ENCODE measurements at regions of chr20 and their contacts with region 1.

Region 1: DNA sequence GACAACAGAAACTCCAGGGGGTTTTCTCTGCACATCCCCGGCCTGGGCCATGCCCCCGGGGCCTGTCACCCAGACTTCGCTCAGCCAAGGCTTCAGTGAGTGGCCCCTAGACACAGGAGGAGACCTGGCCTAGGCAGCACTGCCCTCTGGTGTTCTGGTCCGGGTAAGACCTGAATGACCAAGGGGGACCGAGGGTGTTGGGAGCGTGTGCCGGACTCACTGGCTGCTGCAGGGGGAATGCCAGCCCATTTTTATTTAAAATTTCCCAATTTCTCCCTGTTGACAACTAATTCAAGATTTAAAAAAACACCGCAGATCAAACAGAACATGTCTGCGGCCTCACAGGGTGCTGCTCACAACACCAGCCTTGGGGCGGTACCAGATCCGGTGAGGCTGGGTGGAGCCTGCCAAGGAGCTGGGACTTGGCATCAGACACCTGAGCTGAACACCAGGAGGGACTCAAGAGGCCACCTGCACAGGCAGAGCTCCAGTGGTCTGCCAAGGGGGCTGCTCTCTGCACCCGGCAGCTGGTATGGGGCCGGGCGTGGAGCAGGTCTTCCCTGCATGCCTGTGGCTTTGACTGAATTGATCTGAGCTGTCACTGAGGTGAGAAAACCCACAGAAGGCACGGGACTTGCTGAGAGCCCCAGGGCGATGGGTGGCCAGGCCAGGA is 47.8 kb downstream of the DSTN start:
- DNase-seq: peak; percentile 55
- H3K4me3 ChIP-seq: no peak overlapping the region
- H3K27ac ChIP-seq: no peak overlapping the region
- H3K4me1 ChIP-seq: peaks cover 2% of the 10 kb centered on the region
- H3K27me3 ChIP-seq: no peaks in the 10 kb centered on the region
- CTCF ChIP-seq: peak; percentile 19 to 71 (median 62)
- POLR2A ChIP-seq: no peak

Region 2: GRCh38 chr20:16661756-16662155 is 955.9 kb before region 1 on chr20:
- intact Hi-C with region 1: no loop called
- DNase-seq: no peak
- H3K4me3 ChIP-seq: no peak overlapping the region
- H3K27ac ChIP-seq: no peak overlapping the region
- H3K4me1 ChIP-seq: no peaks in the 10 kb centered on the region
- H3K27me3 ChIP-seq: no peaks in the 10 kb centered on the region
- CTCF ChIP-seq: no peak
- POLR2A ChIP-seq: no peak

Region 3: GRCh38 chr20:17003170-17003870 is 614.4 kb before region 1 on chr20:
- intact Hi-C with region 1: no loop called
- DNase-seq: no peak
- H3K4me3 ChIP-seq: no peak overlapping the region
- H3K27ac ChIP-seq: no peak overlapping the region
- H3K4me1 ChIP-seq: no peaks in the 10 kb centered on the region
- H3K27me3 ChIP-seq: no peaks in the 10 kb centered on the region
- CTCF ChIP-seq: no peak
- POLR2A ChIP-seq: no peak

Region 4: DNA sequence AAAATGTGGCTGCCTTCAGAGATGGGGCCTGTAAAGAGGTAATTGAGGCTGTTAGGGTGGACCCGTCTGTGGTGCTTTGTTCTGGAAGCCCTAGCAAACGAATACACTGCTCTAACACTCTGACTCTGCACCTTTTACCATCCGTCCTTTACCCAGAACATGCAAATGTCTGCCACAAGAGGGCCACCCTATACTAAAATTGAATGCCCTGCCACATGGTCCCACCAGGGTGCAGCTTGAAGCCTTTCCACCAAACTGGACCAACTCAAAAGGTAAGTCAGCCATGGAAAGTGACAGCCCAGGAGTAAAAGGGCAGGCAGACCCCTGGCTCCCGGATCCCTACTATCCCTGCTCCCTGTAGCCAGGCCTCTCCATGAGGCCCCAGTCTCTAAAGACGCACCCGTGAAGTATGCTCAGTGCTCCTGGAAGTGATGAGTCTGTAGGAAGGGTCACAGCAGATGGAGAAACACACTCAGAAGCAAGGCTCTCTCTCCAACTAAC is 80.7 kb before region 1 on chr20:
- intact Hi-C with region 1: loop called (anchors 5 kb)
- DNase-seq: peak; percentile 81
- H3K4me3 ChIP-seq: no peak overlapping the region
- H3K27ac ChIP-seq: no peak overlapping the region
- H3K4me1 ChIP-seq: no peaks in the 10 kb centered on the region
- H3K27me3 ChIP-seq: no peaks in the 10 kb centered on the region
- CTCF ChIP-seq: peak; percentile 84 to 97 (median 89)
- POLR2A ChIP-seq: no peak

Measured in testis (tissue), 5 donors.